ENCODE measurements at regions of chr17 and their contacts with region 1.

Region 1: GRCh38 chr17:58631523-58632323 is 60.1 kb downstream of the TEX14 start:
- DNase-seq: peak; percentile 97
- H3K4me3 Mint-ChIP-seq: no peak overlapping the region
- H3K27ac Mint-ChIP-seq: no peak overlapping the region
- H3K4me1 Mint-ChIP-seq: peaks cover 3% of the 10 kb centered on the region
- H3K27me3 Mint-ChIP-seq: peaks cover 2% of the 10 kb centered on the region

Region 2: GRCh38 chr17:58219001-58219788 is 412.5 kb before region 1 on chr17 and contains the start of gene MKS1:
- CTCF ChIA-PET with region 1: no interaction called
- POLR2A ChIA-PET with region 1: interaction called, 15 read pairs
- DNase-seq: peak; percentile 97
- H3K4me3 Mint-ChIP-seq: peak within 1 kb of the TSS; percentile 95
- H3K27ac Mint-ChIP-seq: peak within 1 kb of the TSS; percentile 93
- H3K4me1 Mint-ChIP-seq: peaks cover 30% of the 10 kb centered on the region
- H3K27me3 Mint-ChIP-seq: peaks cover 4% of the 10 kb centered on the region
- total RNA-seq, gene MKS1: 18.7 to 19.8 TPM

Region 3: DNA sequence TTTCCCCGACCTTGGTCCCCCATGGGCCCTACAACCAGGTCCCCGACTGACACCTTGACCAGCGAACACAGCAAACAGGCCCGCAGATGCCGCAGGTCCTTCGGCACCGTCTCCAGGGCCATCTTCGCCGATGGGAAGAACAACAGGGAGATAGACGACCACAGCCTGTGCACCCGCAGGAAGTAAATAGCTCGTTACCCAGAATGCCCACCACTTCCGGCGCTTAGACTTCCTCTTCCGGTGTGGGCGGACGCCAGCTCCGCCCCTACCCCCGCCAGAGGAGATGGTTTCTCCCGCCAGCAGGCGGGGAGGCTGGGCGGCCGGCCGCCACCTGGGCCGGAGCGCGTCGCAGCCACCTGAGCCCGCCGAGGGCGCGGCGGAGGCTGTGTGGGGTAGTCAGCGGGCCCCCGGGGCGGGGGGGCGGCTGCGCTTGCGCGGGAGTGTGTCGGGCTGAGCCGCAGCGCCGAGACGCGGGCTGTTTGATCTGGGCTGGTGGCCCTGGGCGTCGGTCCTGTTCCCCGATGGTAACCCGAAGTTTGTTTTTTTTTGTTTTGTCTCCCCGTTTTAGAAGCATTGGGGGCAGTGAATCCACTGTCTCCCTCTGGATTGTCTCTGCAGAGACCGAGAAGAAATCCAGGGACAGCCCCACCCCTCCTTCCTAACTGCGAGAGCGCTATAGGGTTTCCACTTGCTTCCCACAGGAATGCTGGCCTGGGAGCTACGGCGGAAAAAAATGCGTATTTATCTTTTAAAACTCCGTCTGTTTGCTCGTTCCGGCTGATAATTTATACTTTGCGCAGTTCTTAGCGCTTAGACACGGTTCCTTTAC is 279.5 kb before region 1 on chr17 and contains the start of gene SUPT4H1:
- CTCF ChIA-PET with region 1: no interaction called
- POLR2A ChIA-PET with region 1: interaction called, 17 read pairs
- DNase-seq: peak; percentile 93
- H3K4me3 Mint-ChIP-seq: peak within 1 kb of the TSS; percentile 100
- H3K27ac Mint-ChIP-seq: peak within 1 kb of the TSS; percentile 97
- H3K4me1 Mint-ChIP-seq: peaks cover 53% of the 10 kb centered on the region
- H3K27me3 Mint-ChIP-seq: no peaks in the 10 kb centered on the region
- total RNA-seq, gene SUPT4H1: 85.8 to 91.0 TPM

Region 4: DNA sequence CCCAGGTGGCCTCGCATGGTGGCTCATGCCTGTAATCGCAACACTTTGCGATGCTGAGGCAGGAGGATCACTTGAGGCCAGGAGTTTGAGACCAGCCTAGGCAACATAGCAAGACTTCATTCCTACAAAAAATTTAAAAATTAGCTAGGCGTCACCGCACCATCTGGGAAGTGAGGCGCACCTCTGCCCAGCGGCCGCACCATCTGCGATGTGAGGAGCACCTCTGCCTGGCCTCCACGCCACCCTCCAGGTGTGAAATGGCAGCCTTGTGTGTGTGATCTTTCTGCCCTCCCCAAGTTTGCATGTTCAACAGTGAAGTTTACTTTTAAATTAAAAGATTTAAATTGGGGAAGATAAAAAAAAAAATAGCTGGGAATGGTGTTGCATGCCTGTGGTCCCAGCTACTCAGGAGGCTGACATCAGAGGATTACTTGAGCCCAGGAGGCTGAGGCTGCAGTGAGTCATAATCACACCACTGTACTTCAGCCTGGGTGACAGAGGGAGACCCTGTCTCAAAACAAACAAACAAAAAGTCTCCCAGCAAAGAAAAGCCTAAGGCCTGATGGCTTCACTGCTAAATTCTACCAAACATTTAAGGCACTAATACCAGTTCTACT is 179.1 kb before region 1 on chr17:
- CTCF ChIA-PET with region 1: no interaction called
- POLR2A ChIA-PET with region 1: no interaction called
- DNase-seq: no peak
- H3K4me3 Mint-ChIP-seq: no peak overlapping the region
- H3K27ac Mint-ChIP-seq: no peak overlapping the region
- H3K4me1 Mint-ChIP-seq: no peaks in the 10 kb centered on the region
- H3K27me3 Mint-ChIP-seq: no peaks in the 10 kb centered on the region

Region 5: GRCh38 chr17:58577642-58578091 is 54.1 kb before region 1 on chr17:
- CTCF ChIA-PET with region 1: interaction called, 4 read pairs
- POLR2A ChIA-PET with region 1: interaction called, 96 read pairs
- DNase-seq: peak; percentile 60
- H3K4me3 Mint-ChIP-seq: no peak overlapping the region
- H3K27ac Mint-ChIP-seq: no peak overlapping the region
- H3K4me1 Mint-ChIP-seq: peaks cover 4% of the 10 kb centered on the region
- H3K27me3 Mint-ChIP-seq: no peaks in the 10 kb centered on the region

Region 6: GRCh38 chr17:58658804-58659713 is 27.3 kb after region 1 on chr17:
- CTCF ChIA-PET with region 1: no interaction called
- POLR2A ChIA-PET with region 1: interaction called, 759 read pairs
- DNase-seq: peak; percentile 83
- H3K4me3 Mint-ChIP-seq: peak overlapping the region; percentile 70
- H3K27ac Mint-ChIP-seq: peak overlapping the region; percentile 94
- H3K4me1 Mint-ChIP-seq: peaks cover 26% of the 10 kb centered on the region
- H3K27me3 Mint-ChIP-seq: peaks cover 13% of the 10 kb centered on the region

Region 7: DNA sequence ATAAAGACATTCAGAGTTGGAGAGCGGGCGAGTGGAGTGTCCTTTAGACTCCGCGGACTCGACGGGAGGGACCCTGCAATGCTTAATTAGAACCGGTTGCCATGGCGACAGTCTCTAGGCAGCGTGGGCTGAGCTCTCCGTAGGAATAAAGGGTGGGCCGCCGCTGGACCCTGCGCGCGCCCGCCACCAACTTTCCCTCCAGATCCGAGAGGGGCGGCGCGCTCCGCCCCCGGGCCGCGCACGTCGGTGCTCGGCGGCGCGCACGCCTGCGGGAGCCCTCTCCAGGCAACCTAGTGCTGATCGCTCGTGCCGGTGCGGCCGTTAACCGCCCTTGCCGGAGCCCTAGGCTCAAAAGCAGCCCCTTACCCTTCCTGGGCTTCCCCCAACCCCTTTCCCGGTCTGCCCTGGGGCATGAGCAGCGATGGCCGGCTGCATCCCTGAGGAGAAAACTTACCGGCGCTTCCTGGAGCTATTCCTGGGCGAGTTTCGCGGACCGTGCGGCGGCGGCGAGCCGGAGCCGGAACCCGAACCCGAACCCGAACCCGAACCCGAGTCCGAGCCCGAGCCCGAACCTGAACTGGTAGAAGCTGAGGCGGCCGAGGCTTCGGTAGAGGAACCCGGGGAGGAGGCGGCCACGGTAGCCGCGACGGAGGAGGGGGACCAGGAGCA is 124.0 kb after region 1 on chr17 and contains the start of gene PPM1E:
- CTCF ChIA-PET with region 1: no interaction called
- POLR2A ChIA-PET with region 1: interaction called, 26 read pairs
- DNase-seq: peak; percentile 60
- H3K4me3 Mint-ChIP-seq: peak within 1 kb of the TSS; percentile 75
- H3K27ac Mint-ChIP-seq: no peak within 1 kb of the TSS
- H3K4me1 Mint-ChIP-seq: peaks cover 11% of the 10 kb centered on the region
- H3K27me3 Mint-ChIP-seq: peaks cover 63% of the 10 kb centered on the region
- total RNA-seq, gene PPM1E: 0.03 TPM in 1 of 2 experiments, not detected in the other